ENCODE measurements at regions of chr13 and their contacts with region 1.

Region 1: GRCh38 chr13:32905063-32905863 is 111.0 kb upstream of the KL start:
- DNase-seq: peak; percentile 40
- H3K4me3 Mint-ChIP-seq: peak overlapping the region; percentile 44
- H3K27ac Mint-ChIP-seq: peak overlapping the region; percentile 87
- H3K4me1 Mint-ChIP-seq: peaks cover 19% of the 10 kb centered on the region
- H3K27me3 Mint-ChIP-seq: peaks cover 33% of the 10 kb centered on the region

Region 2: DNA sequence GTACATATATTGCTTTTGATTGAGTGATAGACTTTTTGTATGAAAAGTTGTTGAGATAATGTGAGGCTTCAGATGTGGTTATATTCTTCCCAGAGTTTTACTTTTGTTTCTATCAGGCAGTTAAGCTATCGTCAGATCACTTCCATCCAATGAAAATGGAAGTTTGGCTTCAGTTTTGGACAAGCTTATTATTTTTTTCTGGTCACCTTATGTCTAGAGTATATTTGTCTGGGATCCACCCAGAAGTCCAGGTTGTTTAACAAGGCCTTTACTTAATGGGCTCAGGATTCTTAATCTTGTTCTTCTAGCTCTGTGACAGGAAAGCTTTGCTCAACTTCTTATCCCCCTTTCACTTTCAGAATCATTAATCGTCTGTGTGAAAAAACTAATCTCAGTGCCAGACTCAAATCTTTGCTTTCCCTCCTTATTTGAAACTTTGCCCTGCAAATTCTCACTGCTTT is 168.1 kb before region 1 on chr13:
- CTCF ChIA-PET with region 1: no interaction called
- POLR2A ChIA-PET with region 1: no interaction called
- intact Hi-C with region 1: loop called (anchors 2 kb)
- DNase-seq: no peak
- H3K4me3 Mint-ChIP-seq: peak overlapping the region; percentile 72
- H3K27ac Mint-ChIP-seq: peak overlapping the region; percentile 83
- H3K4me1 Mint-ChIP-seq: peaks cover 35% of the 10 kb centered on the region
- H3K27me3 Mint-ChIP-seq: no peaks in the 10 kb centered on the region

Region 3: GRCh38 chr13:32840989-32841713 is 64.1 kb before region 1 on chr13:
- CTCF ChIA-PET with region 1: no interaction called
- POLR2A ChIA-PET with region 1: no interaction called
- intact Hi-C with region 1: loop called (anchors 1 kb)
- DNase-seq: peak; percentile 31
- H3K4me3 Mint-ChIP-seq: no peak overlapping the region
- H3K27ac Mint-ChIP-seq: no peak overlapping the region
- H3K4me1 Mint-ChIP-seq: no peaks in the 10 kb centered on the region
- H3K27me3 Mint-ChIP-seq: peaks cover 5% of the 10 kb centered on the region

Region 4: GRCh38 chr13:32917504-32917903 is 12.2 kb after region 1 on chr13:
- CTCF ChIA-PET with region 1: no interaction called
- POLR2A ChIA-PET with region 1: interaction called, 3 read pairs
- intact Hi-C with region 1: loop called (anchors 1 kb)
- DNase-seq: peak; percentile 13
- H3K4me3 Mint-ChIP-seq: no peak overlapping the region
- H3K27ac Mint-ChIP-seq: no peak overlapping the region
- H3K4me1 Mint-ChIP-seq: peaks cover 13% of the 10 kb centered on the region
- H3K27me3 Mint-ChIP-seq: peaks cover 8% of the 10 kb centered on the region

Region 5: GRCh38 chr13:33639626-33640080 is 734.4 kb after region 1 on chr13:
- CTCF ChIA-PET with region 1: no interaction called
- POLR2A ChIA-PET with region 1: no interaction called
- intact Hi-C with region 1: loop called (anchors 2 kb)
- DNase-seq: peak; percentile 82
- H3K4me3 Mint-ChIP-seq: no peak overlapping the region
- H3K27ac Mint-ChIP-seq: peak overlapping the region; percentile 92
- H3K4me1 Mint-ChIP-seq: peaks cover 57% of the 10 kb centered on the region
- H3K27me3 Mint-ChIP-seq: no peaks in the 10 kb centered on the region

Measured in activated CD4-positive, alpha-beta memory T cell treated with anti-CD3 and anti-CD28 coated beads for 36 hours (primary cell).